SK-N-SH (cell line): ENCODE measurements at regions of chrX and their contacts with region 1.

Region 1: DNA sequence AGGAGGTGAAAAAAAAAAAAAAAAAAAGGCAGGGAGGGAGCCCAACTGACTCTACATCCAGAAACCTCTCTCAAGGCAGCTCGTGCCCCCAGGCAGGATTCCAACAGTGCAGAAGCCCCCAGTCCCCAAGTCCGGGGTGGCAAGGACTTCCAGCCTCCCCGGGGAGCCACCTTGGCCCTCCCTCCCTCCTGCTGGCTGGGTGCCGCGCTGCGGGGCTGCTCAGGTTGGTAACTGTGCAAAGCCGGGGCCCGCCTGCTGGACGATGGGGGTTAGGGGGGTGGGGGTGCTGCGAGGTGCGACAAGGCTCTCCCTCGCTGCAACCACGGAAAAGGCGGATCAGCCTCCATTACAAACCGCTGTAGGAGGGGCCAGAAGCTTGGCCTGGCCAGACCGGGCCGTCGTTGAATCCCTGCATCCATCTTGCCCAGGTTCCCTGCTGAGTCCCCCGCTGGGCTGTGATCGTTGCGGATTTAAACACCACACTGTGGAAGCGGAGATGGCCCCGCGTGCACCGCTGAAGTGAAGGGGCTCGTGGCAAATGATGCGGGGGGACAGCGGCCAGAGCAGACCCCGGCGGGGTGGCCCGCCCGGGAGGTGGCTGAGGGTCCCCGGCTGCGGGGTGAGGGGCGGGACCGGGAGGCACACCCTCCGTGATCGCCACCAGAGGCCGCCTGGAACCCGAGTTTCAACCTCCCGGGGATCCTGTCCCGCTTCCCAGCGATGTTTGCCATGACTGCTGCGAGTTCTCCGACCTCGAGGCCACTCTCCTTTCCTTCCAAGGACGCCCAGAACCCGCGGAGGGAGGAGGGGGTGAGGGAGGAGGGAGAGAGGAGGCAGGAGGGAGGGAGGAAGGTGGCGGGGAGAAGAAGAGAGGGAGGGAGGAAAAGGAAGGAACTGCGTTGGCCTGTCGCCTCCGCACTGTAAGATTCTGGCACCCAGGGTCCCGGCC is 58.0 kb upstream of the DDX3X start:
- DNase-seq: peak; percentile 93
- H3K4me3 ChIP-seq: peak overlapping the region; percentile 54 to 71
- H3K27ac ChIP-seq: peak overlapping the region; percentile 41 to 67; a peak in 3 of 4 replicates
- H3K4me1 ChIP-seq: no peaks in the 10 kb centered on the region; a peak in 1 of 4 replicates
- H3K27me3 ChIP-seq: no peaks in the 10 kb centered on the region
- CTCF ChIP-seq: peak; percentile 66
- EP300 ChIP-seq: peak in 1 of 2 experiments; percentile 15; a peak in 1 of 4 replicates
- RAD21 ChIP-seq: peak; percentile 76

Region 2: GRCh38 chrX:41333744-41334259 is 57.9 kb after region 1 on chrX and contains the start of gene DDX3X:
- CTCF ChIA-PET with region 1: no interaction called
- POLR2A ChIA-PET with region 1: interaction called, 10 read pairs
- DNase-seq: peak; percentile 82
- H3K4me3 ChIP-seq: peak within 1 kb of the TSS; percentile 99 to 100
- H3K27ac ChIP-seq: peak within 1 kb of the TSS; percentile 97 to 99
- H3K4me1 ChIP-seq: peaks cover 0 to 26% of the 10 kb centered on the region in 2 experiments; a peak in 3 of 4 replicates
- H3K27me3 ChIP-seq: no peaks in the 10 kb centered on the region
- CTCF ChIP-seq: peak; percentile 31; the same call in 1 of the 2 replicates
- EP300 ChIP-seq: no peak
- RAD21 ChIP-seq: no peak
- polyA plus RNA-seq, gene DDX3X: 30.9 and 46.4 TPM in 2 replicates